Panc1 (cell line): ENCODE measurements at regions of chr5 and their contacts with region 1.

Region 1: GRCh38 chr5:39328731-39329130 is 35.6 kb downstream of the C9 start:
- DNase-seq: no peak
- ATAC-seq: no peak
- H3K4me3 ChIP-seq: no peak overlapping the region
- H3K27ac ChIP-seq: no peak overlapping the region
- H3K4me1 ChIP-seq: no peaks in the 10 kb centered on the region
- H3K27me3 ChIP-seq: no peaks in the 10 kb centered on the region; the same call in 1 of the 2 replicates
- CTCF ChIP-seq: no peak

Region 2: DNA sequence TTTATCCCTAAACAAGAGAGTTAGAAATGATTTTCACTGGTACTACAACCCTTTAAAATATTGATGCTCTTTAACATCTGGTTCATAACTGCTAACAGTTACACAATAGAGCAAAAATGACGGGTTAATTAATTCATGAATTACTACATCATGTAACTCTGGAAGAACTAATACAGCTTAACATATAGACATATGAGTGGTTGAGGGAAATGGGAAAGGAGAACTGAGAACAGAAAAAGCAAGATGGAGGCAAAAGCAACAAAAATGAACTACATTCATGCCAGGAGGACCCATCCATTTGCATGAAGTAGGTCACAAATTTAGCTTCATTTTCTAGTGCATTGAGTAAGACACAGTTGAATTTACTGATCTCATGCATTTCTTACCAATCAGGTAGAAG is 26.3 kb before region 1 on chr5:
- CTCF ChIA-PET with region 1: no interaction called
- POLR2A ChIA-PET with region 1: interaction called, 12 read pairs
- in situ Hi-C with region 1: no loop called
- intact Hi-C with region 1: no loop called
- DNase-seq: no peak
- ATAC-seq: no peak
- H3K4me3 ChIP-seq: no peak overlapping the region
- H3K27ac ChIP-seq: no peak overlapping the region
- H3K4me1 ChIP-seq: no peaks in the 10 kb centered on the region
- H3K27me3 ChIP-seq: no peaks in the 10 kb centered on the region
- CTCF ChIP-seq: no peak